Dorsolateral prefrontal cortex (tissue), 120 donors: ENCODE measurements at regions of chr15 and their contacts with region 1.

Region 1: GRCh38 chr15:43230640-43231115 is 9.9 kb upstream of the EPB42 start:
- DNase-seq: no peak
- H3K4me3 ChIP-seq: no peak overlapping the region
- H3K27ac ChIP-seq: no peak overlapping the region
- H3K27me3 ChIP-seq: no peaks in the 10 kb centered on the region
- CTCF ChIP-seq: no peak

Region 2: GRCh38 chr15:43127752-43128151 is 102.9 kb before region 1 on chr15:
- intact Hi-C with region 1: no loop called
- DNase-seq: no peak
- H3K4me3 ChIP-seq: no peak overlapping the region
- H3K27ac ChIP-seq: no peak overlapping the region
- H3K27me3 ChIP-seq: no peaks in the 10 kb centered on the region
- CTCF ChIP-seq: no peak

Region 3: GRCh38 chr15:43165801-43166325 is 64.8 kb before region 1 on chr15:
- intact Hi-C with region 1: no loop called
- DNase-seq: no peak
- H3K4me3 ChIP-seq: no peak overlapping the region
- H3K27ac ChIP-seq: no peak overlapping the region
- H3K27me3 ChIP-seq: no peaks in the 10 kb centered on the region
- CTCF ChIP-seq: no peak

Region 4: DNA sequence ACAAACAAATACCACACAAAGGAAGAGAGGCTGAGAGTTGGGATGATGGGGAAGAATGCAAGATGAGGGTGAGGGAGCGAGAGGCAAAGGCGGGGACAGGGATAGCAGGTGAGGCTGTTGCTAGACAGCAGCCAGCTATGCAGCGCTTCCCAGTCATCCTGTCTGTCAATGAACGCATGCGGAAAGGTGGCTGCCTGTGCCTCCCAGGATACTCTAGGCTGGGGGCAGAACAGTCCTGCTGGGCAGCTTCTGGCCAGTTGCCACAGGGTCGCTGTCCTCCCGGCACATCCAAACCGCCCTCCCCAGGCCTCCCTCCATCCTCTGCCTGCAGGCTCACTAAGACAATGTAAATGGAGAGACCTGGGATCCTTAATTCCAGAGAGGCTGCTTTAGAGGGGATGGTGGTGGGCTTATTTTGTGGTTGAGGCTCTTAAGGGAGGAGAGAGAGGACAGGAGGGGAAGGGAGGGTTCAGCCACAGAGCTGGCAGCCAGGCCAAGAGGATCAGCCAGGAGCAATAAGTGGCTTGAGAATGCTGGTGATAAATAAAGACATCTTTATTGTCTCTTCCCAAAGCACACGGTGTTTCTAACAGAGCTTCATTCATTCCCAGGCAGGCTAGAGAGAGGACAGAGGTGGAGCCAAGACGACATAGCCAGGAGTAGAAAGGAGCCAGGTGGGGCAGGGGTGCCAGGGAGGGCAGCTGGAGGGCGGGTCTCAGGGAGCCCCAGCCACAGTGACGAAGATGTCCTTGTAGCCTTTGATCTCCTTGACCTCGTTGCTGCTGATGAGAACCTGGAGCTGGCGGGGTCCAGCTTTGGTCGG is 45.3 kb after region 1 on chr15:
- intact Hi-C with region 1: loop called (anchors 5 kb)
- DNase-seq: no peak
- H3K4me3 ChIP-seq: no peak overlapping the region
- H3K27ac ChIP-seq: no peak overlapping the region
- H3K27me3 ChIP-seq: peaks cover 0 to 9% (median 0%) of the 10 kb centered on the region in 45 donors
- CTCF ChIP-seq: no peak